Left ventricle myocardium inferior (tissue), 1 donor: ENCODE measurements at regions of chr19 and their contacts with region 1.

Region 1: DNA sequence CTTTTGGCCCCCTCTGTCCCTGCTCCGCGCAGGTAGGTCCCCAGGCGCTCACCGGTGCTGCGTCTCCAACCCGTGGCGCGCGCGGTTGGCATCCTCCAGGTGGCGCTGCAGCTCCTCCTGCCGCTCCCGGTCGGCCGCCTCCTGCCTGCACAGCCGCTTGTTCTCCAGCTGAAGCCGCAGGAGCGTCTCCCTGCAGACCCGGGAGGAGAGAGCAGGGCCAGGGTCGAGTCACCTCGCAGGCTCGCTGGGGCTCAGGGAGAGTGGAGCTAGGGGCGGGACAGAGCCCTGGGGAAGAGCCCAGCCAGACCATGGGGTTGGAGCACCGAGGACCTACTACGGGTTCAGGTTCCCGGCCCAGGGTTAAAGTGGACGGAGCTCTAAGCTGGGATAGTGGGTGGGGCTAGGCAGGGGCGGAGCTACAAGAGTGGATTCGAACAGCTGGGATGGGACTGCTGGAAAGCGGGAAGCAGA is 9.3 kb downstream of the HOOK2 start:
- DNase-seq: peak; percentile 90
- H3K4me3 ChIP-seq: peak overlapping the region; percentile 64
- H3K27ac ChIP-seq: peak overlapping the region; percentile 82
- H3K4me1 ChIP-seq: peaks cover 45% of the 10 kb centered on the region
- H3K27me3 ChIP-seq: no peaks in the 10 kb centered on the region
- CTCF ChIP-seq: peak; percentile 98

Region 2: DNA sequence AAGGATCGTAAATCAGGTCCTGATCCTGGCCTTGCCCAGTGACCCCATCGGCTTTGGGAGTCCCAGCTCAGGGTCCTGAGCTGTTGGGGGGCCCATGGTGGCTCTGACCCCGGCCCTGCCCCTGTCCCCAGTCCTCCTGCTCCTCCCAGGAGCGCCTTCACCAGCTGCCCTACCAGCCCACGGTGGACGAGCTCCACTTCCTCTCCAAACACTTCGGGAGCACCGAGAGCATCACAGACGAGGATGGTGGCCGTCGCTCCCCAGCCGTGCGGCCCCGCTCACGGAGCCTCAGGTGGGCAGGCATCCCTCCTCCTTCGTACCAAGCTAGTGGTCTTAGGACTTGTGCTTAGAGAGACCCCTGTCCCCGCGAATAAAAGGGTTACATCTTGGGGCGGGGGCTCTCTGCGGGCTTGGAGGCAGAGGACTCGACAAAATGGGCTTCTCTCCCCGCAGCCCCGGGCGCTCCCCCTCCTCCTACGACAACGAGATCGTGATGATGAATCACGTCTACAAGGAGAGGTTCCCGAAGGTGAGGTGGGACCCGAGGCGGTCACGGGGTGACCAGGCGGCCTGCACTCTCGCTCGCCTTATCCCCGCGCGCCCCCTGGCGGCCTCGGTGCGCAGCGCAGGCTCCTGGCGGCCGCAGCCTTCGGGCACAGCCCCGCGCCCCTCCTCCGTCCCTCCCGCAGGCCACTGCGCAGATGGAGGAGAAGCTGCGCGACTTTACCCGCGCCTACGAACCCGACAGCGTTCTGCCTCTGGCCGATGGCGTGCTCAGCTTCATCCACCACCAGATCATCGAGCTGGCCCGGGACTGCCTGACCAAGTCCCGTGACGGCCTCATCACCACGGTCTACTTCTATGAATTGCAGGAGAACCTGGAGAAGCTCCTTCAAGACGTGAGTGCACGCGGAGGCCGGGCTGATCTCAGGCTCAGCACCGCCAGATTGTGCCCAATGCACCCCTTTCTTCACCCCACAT is 81.4 kb after region 1 on chr19:
- intact Hi-C with region 1: loop called (anchors 10 kb)
- DNase-seq: peak; percentile 83
- H3K4me3 ChIP-seq: peak overlapping the region; percentile 50
- H3K27ac ChIP-seq: no peak overlapping the region
- H3K4me1 ChIP-seq: peaks cover 9% of the 10 kb centered on the region
- H3K27me3 ChIP-seq: peaks cover 46% of the 10 kb centered on the region
- CTCF ChIP-seq: peak; percentile 99